HEK293T (cell line): ENCODE measurements at regions of chr15 and their contacts with region 1.

Region 1: DNA sequence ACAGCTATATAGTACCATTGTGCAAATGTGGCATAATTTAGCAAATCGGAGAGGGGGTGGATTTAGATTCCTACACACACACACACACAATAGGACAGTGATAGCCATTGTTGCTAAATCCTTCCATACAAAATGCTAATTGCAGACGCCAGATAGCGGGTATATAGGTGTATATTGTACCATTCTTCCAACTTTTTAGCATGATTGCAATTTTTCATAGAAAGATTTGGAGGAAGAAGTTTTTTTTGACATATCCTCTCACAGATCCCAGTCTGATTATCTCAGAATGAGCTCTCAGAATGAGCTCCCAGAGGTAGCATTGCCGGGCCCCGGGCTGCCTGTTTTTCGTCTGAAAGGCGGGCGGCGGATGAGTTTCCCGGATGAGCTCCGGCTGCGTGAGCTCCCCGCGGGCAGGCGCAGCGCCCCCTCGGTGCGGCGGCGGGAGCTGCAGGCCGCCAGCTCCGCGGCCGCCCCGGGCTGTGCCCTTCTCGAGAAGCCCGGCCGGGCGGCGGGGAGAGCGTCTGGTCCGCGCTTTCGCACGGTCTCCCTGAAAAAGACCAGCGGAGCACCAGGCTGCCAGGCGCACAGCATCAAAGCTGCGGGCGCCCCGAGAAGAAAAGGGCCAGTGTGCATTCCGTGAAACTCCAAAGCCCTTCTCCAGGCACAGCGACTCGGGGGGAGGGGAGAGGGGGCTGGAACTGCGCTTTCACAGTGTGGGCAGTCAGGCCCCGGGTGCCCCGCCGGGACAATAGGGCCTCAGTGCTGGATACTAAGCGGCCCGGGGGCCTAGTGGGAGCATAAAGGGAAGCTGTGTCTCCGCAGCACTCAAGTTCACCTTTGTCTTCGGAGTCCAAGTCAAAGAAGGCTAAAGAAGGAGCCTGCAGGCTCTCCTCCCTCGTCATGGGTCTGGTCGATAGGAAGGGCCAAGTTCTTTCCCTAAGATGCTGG is 12.0 kb upstream of the SHC4 start:
- DNase-seq: peak; percentile 73

Region 2: DNA sequence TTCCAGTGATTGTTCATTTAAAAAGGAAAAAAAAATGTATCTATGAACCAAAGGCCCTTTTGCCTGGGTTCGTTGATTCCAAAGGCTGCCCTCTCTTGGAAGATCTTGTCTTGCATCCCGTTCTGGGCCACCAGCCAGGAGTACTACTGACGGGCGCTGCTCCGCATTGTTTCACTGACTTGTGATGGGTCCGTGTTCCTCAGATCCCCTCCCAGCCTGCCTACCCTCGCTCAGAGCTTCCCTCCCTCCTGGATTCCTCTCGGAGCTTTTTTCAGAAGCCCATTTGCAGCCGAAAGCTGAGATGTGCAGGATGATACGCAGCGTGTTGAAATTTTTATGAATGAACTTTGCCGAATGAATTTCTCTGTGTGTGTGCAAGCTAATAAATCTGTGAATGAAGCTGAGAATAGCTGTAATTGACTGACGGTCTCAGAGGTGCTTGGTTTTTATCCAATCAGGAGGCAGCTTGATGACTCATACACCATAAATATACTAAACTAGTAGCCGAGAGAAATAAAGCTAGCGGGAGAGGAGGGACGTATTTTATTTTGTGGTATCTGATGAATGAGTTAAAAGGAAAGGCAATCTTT is 12.1 kb before region 1 on chr15 and contains the start of gene SHC4:
- CTCF ChIA-PET with region 1: interaction called, 29 read pairs
- POLR2A ChIA-PET with region 1: interaction called, 35 read pairs
- DNase-seq: peak; percentile 58